ENCODE measurements at regions of chr14 and their contacts with region 1.

Region 1: DNA sequence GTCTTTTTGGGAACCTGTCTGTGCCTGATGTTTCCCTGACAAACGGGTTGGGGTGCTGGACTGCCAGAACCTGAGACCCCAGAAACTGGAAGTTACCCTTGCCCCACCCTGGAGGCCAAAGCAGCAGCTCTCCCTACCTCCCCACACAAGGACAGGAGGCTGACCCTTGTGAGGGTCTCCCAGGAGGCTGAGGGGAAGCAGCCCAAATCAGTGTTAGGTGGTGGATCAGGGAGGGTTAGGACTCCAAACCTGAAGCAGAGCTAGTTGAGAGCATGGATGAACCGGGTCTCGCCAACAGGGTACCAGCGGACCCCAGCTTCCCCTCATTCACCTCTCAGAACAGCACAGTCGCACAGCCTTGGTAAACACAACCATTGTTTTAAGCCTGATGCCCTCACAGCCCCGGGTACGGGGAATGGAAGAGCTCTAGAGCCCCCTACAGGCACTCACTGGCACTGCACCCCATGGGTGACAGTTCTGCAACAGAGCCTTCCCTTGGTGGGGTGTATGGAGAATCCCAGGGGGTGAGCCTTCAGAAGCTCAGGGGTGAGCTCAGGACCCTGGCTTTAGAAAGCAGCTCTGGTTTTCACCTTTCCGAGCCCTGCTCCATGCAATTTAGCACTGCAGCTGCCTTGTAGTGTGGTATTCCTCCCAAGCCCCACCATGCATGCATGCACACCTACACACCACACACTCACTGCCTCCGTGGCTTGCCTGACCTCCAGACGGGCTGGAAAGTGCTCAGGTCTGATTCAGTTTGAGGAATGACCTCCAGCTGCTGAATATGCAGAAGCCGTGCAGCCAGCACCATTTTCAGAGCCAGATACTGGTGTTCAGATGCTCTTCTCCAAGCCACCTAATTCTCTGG is 11.2 kb downstream of the ESRRB start:
- DNase-seq: peak; percentile 57 to 81 (median 65)
- ATAC-seq: peak; percentile 61 to 90 (median 86)
- H3K4me3 ChIP-seq: no peak overlapping the region
- H3K27ac ChIP-seq: no peak overlapping the region
- H3K4me1 ChIP-seq: peaks cover 0 to 4% (median 0%) of the 10 kb centered on the region in 12 donors
- H3K27me3 ChIP-seq: peaks cover 0 to 26% (median 0%) of the 10 kb centered on the region in 9 donors
- CTCF ChIP-seq: peak; percentile 84 to 98 (median 96)
- POLR2A ChIP-seq: no peak

Region 2: DNA sequence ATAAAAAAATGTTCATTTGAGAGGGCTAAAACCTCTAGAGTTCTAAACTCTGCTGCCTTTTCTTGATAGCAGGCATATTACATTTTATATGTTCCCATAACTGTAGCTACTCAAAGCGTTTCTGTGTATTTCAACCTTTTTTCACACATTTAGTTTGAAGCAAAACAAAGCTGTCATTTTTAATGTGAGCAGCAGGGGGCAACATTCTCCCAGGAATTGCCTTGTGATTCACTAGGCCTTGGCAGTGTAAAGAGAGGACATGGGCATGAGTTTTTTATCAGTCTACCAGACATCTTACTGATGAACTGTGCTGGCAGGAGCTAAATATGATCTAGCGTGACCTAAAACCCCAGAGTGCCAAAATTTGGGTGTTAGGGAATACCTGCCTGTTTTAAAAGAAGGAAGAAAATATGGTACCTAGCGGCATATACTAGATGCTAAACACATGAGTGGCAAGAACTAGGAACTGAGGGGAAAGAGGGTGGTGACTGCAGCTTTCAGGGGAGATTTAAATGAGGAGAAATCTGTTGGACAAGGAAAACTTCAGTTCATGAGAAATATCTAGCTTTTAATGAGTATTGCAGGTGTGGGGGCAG is 336.3 kb before region 1 on chr14:
- intact Hi-C with region 1: loop called (anchors 1 to 10 kb)
- DNase-seq: peak in 2 of 5 donors; percentile 44 to 50
- ATAC-seq: peak in 3 of 4 donors; percentile 73 to 78 (median 75)
- H3K4me3 ChIP-seq: no peak overlapping the region
- H3K27ac ChIP-seq: no peak overlapping the region
- H3K4me1 ChIP-seq: peaks cover 0 to 3% (median 0%) of the 10 kb centered on the region in 12 donors
- H3K27me3 ChIP-seq: no peaks in the 10 kb centered on the region
- CTCF ChIP-seq: peak; percentile 57 to 85 (median 76)
- POLR2A ChIP-seq: no peak